ENCODE measurements at regions of chr19 and their contacts with region 1.

Region 1: GRCh38 chr19:17784201-17785008 is 10.5 kb upstream of the B3GNT3 start:
- DNase-seq: peak; percentile 80
- H3K4me3 Mint-ChIP-seq: no peak overlapping the region
- H3K27ac Mint-ChIP-seq: no peak overlapping the region
- H3K4me1 Mint-ChIP-seq: peaks cover 5% of the 10 kb centered on the region
- H3K27me3 Mint-ChIP-seq: no peaks in the 10 kb centered on the region
- CTCF ChIP-seq: peak; percentile 79

Region 2: GRCh38 chr19:17599780-17600179 is 184.6 kb before region 1 on chr19:
- CTCF ChIA-PET with region 1: no interaction called
- POLR2A ChIA-PET with region 1: no interaction called
- intact Hi-C with region 1: no loop called
- DNase-seq: no peak
- H3K4me3 Mint-ChIP-seq: no peak overlapping the region
- H3K27ac Mint-ChIP-seq: no peak overlapping the region
- H3K4me1 Mint-ChIP-seq: no peaks in the 10 kb centered on the region
- H3K27me3 Mint-ChIP-seq: peaks cover 43% of the 10 kb centered on the region
- CTCF ChIP-seq: no peak

Region 3: GRCh38 chr19:17794731-17795536 is 10.5 kb after region 1 on chr19 and contains the start of gene B3GNT3:
- CTCF ChIA-PET with region 1: interaction called, 23 read pairs
- POLR2A ChIA-PET with region 1: no interaction called
- intact Hi-C with region 1: no loop called
- DNase-seq: peak; percentile 82
- H3K4me3 Mint-ChIP-seq: peak within 1 kb of the TSS; percentile 44
- H3K27ac Mint-ChIP-seq: no peak within 1 kb of the TSS
- H3K4me1 Mint-ChIP-seq: peaks cover 18% of the 10 kb centered on the region
- H3K27me3 Mint-ChIP-seq: no peaks in the 10 kb centered on the region
- CTCF ChIP-seq: no peak
- total RNA-seq, gene B3GNT3: 0.40 and 0.49 TPM in 2 replicates